ENCODE measurements at regions of chr17 and their contacts with region 1.

Region 1: GRCh38 chr17:40996829-40997228 is 2.9 kb upstream of the KRTAP3-3 start:
- DNase-seq: no peak
- ATAC-seq: no peak
- H3K4me3 ChIP-seq: no peak overlapping the region
- H3K27ac ChIP-seq: no peak overlapping the region
- H3K4me1 ChIP-seq: no peaks in the 10 kb centered on the region
- H3K27me3 ChIP-seq: peaks cover 21% of the 10 kb centered on the region
- CTCF ChIP-seq: no peak

Region 2: GRCh38 chr17:40848583-40849235 is 148.1 kb before region 1 on chr17:
- CTCF ChIA-PET with region 1: interaction called, 12 read pairs
- POLR2A ChIA-PET with region 1: no interaction called
- in situ Hi-C with region 1: no loop called
- intact Hi-C with region 1: no loop called
- DNase-seq: no peak
- ATAC-seq: no peak
- H3K4me3 ChIP-seq: no peak overlapping the region
- H3K27ac ChIP-seq: no peak overlapping the region
- H3K4me1 ChIP-seq: no peaks in the 10 kb centered on the region
- H3K27me3 ChIP-seq: peaks cover 3% of the 10 kb centered on the region; the same call in 1 of the 2 replicates
- CTCF ChIP-seq: no peak

Region 3: DNA sequence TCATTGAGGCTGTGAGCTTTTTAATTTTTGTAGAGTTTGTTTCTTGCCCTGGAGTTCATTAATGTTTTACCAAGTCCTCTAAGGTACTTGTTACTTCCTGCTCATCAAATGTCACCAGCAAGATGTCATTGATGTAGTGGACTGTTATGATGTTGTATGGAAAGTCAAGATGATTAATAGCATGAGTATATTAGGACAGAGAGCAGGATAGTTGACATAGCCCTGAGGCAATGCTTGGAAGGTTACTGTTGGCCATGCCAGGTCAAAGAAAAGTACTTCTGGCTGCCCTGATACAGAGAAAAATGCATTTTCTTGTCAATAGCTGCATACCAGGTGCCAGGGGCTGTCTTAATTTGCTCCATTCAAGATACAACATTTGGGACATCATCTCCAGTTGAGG is 23.5 kb after region 1 on chr17:
- CTCF ChIA-PET with region 1: no interaction called
- POLR2A ChIA-PET with region 1: no interaction called
- in situ Hi-C with region 1: no loop called
- intact Hi-C with region 1: no loop called
- DNase-seq: no peak
- ATAC-seq: no peak
- H3K4me3 ChIP-seq: no peak overlapping the region
- H3K27ac ChIP-seq: no peak overlapping the region
- H3K4me1 ChIP-seq: no peaks in the 10 kb centered on the region
- H3K27me3 ChIP-seq: peaks cover 2% of the 10 kb centered on the region; the same call in 1 of the 2 replicates
- CTCF ChIP-seq: no peak

Region 4: GRCh38 chr17:41098476-41098875 is 101.6 kb after region 1 on chr17:
- CTCF ChIA-PET with region 1: no interaction called
- POLR2A ChIA-PET with region 1: no interaction called
- in situ Hi-C with region 1: no loop called
- intact Hi-C with region 1: no loop called
- DNase-seq: no peak
- ATAC-seq: no peak
- H3K4me3 ChIP-seq: no peak overlapping the region
- H3K27ac ChIP-seq: no peak overlapping the region
- H3K4me1 ChIP-seq: no peaks in the 10 kb centered on the region
- H3K27me3 ChIP-seq: no peaks in the 10 kb centered on the region
- CTCF ChIP-seq: no peak